T-cell (primary cell): ENCODE measurements at regions of chr17 and their contacts with region 1.

Region 1: GRCh38 chr17:62008294-62008693 is 56.8 kb downstream of the MED13 start:
- DNase-seq: no peak
- ATAC-seq: no peak
- H3K4me3 ChIP-seq: no peak overlapping the region
- H3K4me3 Mint-ChIP-seq: no peak overlapping the region
- H3K27ac ChIP-seq: no peak overlapping the region
- H3K27ac Mint-ChIP-seq: no peak overlapping the region
- H3K4me1 ChIP-seq: no peaks in the 10 kb centered on the region
- H3K4me1 Mint-ChIP-seq: peaks cover 32 to 46% (median 32%) of the 10 kb centered on the region in 3 donors
- H3K27me3 ChIP-seq: no peaks in the 10 kb centered on the region
- H3K27me3 Mint-ChIP-seq: no peaks in the 10 kb centered on the region

Region 2: GRCh38 chr17:61883211-61883610 is 125.1 kb before region 1 on chr17:
- CTCF ChIA-PET with region 1: no interaction called
- POLR2A ChIA-PET with region 1: interaction called in 1 of 2 experiments, 11 read pairs
- DNase-seq: no peak
- ATAC-seq: no peak
- H3K4me3 ChIP-seq: no peak overlapping the region
- H3K4me3 Mint-ChIP-seq: no peak overlapping the region
- H3K27ac ChIP-seq: no peak overlapping the region
- H3K27ac Mint-ChIP-seq: no peak overlapping the region
- H3K4me1 ChIP-seq: no peaks in the 10 kb centered on the region
- H3K4me1 Mint-ChIP-seq: no peaks in the 10 kb centered on the region
- H3K27me3 ChIP-seq: no peaks in the 10 kb centered on the region
- H3K27me3 Mint-ChIP-seq: no peaks in the 10 kb centered on the region

Region 3: GRCh38 chr17:61968757-61969156 is 39.5 kb before region 1 on chr17:
- CTCF ChIA-PET with region 1: no interaction called
- POLR2A ChIA-PET with region 1: no interaction called
- DNase-seq: no peak
- ATAC-seq: no peak
- H3K4me3 ChIP-seq: no peak overlapping the region
- H3K4me3 Mint-ChIP-seq: no peak overlapping the region
- H3K27ac ChIP-seq: no peak overlapping the region
- H3K27ac Mint-ChIP-seq: no peak overlapping the region
- H3K4me1 ChIP-seq: no peaks in the 10 kb centered on the region
- H3K4me1 Mint-ChIP-seq: peaks cover 0 to 4% (median 2%) of the 10 kb centered on the region in 3 donors
- H3K27me3 ChIP-seq: no peaks in the 10 kb centered on the region
- H3K27me3 Mint-ChIP-seq: no peaks in the 10 kb centered on the region